ENCODE measurements at regions of chr17 and their contacts with region 1.

Region 1: DNA sequence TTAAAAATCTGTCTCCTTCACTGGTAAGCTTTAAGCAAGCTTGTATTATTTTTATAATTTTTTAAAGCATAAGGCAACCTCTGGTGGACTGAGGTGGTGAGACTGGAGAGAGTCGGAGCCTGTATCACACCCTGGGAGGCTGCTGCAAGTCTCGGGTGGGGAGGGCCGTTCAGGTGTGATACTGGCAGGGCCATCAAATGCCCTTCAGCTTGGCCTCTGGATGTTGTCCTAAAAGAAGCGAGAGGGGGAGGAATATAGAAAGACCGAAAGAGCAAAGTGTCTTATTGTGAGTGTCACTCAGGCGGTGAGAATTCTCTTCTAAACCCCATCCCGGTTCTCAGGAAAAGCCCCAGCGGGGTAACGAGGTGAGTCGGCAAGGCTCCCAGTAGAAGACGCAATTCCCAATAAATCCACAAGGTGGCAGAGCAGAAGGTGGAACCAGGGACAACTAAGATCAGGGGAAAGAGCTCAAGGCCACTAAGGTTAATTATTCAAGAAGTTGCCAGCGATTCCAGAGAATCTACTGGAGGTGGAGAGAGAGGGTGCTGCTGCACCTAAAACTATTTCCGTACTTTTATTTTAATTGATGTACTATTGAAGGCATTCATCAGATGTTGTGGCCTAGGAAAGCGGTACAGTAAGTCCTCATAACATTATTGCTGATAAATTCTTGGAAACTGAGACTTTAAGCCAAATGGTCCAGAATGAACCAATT is 14.1 kb downstream of the C17orf67 start:
- DNase-seq: peak in 4 of 10 donors; percentile 48 to 65 (median 53)

Region 2: DNA sequence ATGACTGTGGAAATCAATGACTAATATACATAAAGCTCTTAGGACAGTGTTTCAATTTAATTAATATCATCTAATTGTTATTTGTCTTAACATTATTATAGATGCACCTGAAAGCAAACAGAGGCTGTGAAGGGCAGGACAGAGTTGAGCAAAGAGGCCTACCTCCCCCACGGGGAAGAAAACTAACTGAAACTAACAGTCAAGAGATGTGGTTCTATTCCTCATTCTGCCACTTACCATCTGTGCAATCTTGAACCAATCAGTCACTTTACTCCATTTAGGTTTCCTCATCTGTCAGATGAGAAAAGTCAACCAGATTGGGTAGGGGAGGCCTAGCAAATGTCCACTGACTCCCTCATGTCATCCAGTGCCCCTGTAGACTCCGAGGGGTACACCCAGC is 44.9 kb before region 1 on chr17:
- intact Hi-C with region 1: no loop called
- DNase-seq: no peak

Region 3: GRCh38 chr17:56939901-56940343 is 120.3 kb after region 1 on chr17:
- intact Hi-C with region 1: loop called (anchors 1 kb)
- DNase-seq: no peak

Measured in posterior cingulate gyrus (tissue), 11 donors.